ENCODE measurements at regions of chr7 and their contacts with region 1.

Region 1: GRCh38 chr7:107743567-107744344 is at the start of gene CBLL1:
- DNase-seq: peak; percentile 94 to 98 (median 97)
- ATAC-seq: peak; percentile 90 to 91
- H3K4me3 Mint-ChIP-seq: peak within 1 kb of the TSS; percentile 90 to 100 (median 98)
- H3K27ac Mint-ChIP-seq: peak within 1 kb of the TSS; percentile 99 to 100 (median 100)
- H3K4me1 Mint-ChIP-seq: peaks cover 17 to 59% (median 42%) of the 10 kb centered on the region in 4 donors
- H3K27me3 Mint-ChIP-seq: no peaks in the 10 kb centered on the region
- polyA plus RNA-seq, gene CBLL1: 44.8 to 56.3 (median 48.6) TPM

Region 2: DNA sequence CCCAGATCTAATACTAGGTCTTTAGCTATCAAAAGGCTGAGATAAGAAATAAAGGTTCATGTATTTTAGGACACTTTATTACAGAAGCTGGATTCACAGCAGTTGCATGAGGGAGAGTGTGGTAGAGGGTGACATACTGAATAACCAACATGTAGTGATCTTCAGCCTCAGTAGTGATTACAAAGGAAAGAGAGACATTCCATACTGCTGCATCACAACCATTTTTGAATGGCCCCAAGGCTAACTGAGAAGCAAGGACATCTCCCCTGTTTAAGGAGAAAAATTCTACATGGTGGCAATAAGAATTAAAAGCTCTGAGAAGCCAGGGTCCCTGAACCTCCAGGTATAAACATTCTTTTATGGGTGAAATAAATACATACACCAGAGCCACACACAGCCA is 215.3 kb before region 1 on chr7:
- POLR2A ChIA-PET with region 1: no interaction called
- DNase-seq: no peak
- ATAC-seq: no peak
- H3K4me3 Mint-ChIP-seq: no peak overlapping the region
- H3K27ac Mint-ChIP-seq: peak overlapping the region in 1 of 10 donors; percentile 11
- H3K4me1 Mint-ChIP-seq: peaks cover 15 to 41% (median 22%) of the 10 kb centered on the region in 4 donors
- H3K27me3 Mint-ChIP-seq: no peaks in the 10 kb centered on the region

Region 3: DNA sequence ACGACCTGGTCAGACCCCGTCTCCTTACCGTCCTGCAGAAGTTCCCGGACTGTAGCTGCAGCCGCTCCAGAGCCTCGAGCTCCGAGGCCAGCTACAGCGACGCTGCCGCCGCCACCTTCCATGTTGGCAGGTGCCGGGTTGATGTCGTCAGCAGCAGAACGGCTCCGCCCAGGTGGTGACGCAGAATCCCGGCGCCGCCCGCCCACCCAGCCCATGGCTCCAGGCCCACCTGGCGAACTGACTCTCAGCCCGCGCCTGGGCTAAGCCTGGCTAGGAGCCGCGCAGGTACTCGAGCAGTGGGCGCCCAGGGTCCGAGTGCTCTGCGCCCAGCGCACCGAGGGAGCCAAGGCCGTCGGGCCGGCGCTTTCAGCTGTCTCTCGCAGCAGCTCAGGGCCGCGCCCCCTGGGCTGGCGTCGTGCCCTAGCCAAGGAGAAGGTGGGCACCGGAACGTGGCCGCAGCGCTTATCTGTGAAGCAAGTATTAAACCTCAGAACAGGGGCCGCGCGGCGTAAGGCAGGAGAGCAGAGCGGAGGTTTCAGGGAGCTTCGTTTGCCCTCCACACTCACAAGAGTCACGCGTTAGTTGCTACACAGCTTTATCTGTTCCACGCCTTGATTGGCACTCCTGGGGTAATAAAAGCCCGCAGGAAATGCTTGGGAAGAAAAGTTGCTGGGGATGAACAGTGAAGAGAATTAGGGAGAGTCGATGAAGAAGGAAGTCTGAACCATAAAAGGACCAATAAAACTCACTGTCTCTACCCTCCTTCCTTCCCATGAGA is 179.8 kb before region 1 on chr7 and contains the starts of genes COG5 and DUS4L:
- POLR2A ChIA-PET with region 1: interaction called, 13 read pairs
- DNase-seq: peak; percentile 79 to 90 (median 83)
- ATAC-seq: peak; percentile 84 to 85
- H3K4me3 Mint-ChIP-seq: peak within 1 kb of the TSS; percentile 85 to 95 (median 90)
- H3K27ac Mint-ChIP-seq: peak within 1 kb of the TSS; percentile 92 to 98 (median 96)
- H3K4me1 Mint-ChIP-seq: peaks cover 40 to 62% (median 59%) of the 10 kb centered on the region in 4 donors
- H3K27me3 Mint-ChIP-seq: no peaks in the 10 kb centered on the region
- polyA plus RNA-seq, gene COG5: 24.3 to 30.9 (median 29.6) TPM
- polyA plus RNA-seq, gene DUS4L: 5.6 to 9.5 (median 9.0) TPM

Region 4: GRCh38 chr7:107856806-107857540 is 113.2 kb after region 1 on chr7:
- POLR2A ChIA-PET with region 1: interaction called, 23 read pairs
- DNase-seq: peak in 4 of 10 donors; percentile 6 to 36 (median 33)
- ATAC-seq: peak; percentile 85 to 88
- H3K4me3 Mint-ChIP-seq: peak overlapping the region; percentile 26 to 72 (median 53)
- H3K27ac Mint-ChIP-seq: peak overlapping the region; percentile 77 to 93 (median 87)
- H3K4me1 Mint-ChIP-seq: peaks cover 17 to 40% (median 33%) of the 10 kb centered on the region in 4 donors
- H3K27me3 Mint-ChIP-seq: no peaks in the 10 kb centered on the region

Region 5: DNA sequence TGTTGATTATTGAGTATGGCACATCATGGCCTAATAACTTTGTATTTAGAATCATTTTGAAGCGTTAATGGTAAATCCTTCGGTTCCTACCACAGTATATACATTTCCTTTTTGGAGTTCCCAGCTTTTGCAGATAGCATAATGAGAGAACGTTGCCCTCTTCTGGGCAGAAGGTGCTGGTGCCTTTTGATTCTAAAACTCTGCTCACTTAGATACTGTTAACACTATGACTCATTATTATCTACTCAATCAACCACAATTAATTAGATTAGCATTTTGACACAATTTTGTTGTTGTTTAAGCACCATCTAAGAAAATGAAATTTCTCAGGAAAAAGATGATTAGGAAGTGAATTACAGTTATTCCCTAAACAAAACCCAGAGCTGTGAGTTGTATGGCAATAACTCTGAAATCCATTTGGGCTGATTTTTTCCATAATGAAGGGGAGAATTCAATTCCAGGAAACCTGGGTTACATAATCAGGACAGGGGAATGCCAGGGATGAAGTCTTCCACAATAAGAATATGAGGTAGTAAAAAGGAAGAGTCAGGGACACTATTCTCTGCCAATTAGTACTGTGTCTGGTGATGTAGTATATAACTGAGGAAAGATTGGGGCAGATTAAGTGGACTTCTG is 135.8 kb after region 1 on chr7:
- POLR2A ChIA-PET with region 1: interaction called, 42 read pairs
- DNase-seq: peak in 5 of 10 donors; percentile 19 to 45 (median 40)
- ATAC-seq: peak; percentile 67 to 73
- H3K4me3 Mint-ChIP-seq: no peak overlapping the region
- H3K27ac Mint-ChIP-seq: peak overlapping the region in 1 of 10 donors; percentile 2
- H3K4me1 Mint-ChIP-seq: peaks cover 3 to 24% (median 15%) of the 10 kb centered on the region in 4 donors
- H3K27me3 Mint-ChIP-seq: peaks cover 4 to 12% (median 9%) of the 10 kb centered on the region in 5 donors

Region 6: GRCh38 chr7:107890962-107891635 is 147.3 kb after region 1 on chr7 and contains the start of gene DLD:
- POLR2A ChIA-PET with region 1: interaction called, 32 read pairs
- DNase-seq: peak; percentile 87 to 96 (median 94)
- ATAC-seq: peak; percentile 97
- H3K4me3 Mint-ChIP-seq: peak within 1 kb of the TSS; percentile 95 to 100 (median 97)
- H3K27ac Mint-ChIP-seq: peak within 1 kb of the TSS; percentile 98 to 100 (median 99)
- H3K4me1 Mint-ChIP-seq: peaks cover 30 to 54% (median 51%) of the 10 kb centered on the region in 4 donors
- H3K27me3 Mint-ChIP-seq: peaks cover 0 to 2% (median 0%) of the 10 kb centered on the region in 5 donors
- polyA plus RNA-seq, gene DLD: 70.1 to 72.1 (median 71.4) TPM